ENCODE measurements at regions of chrX and their contacts with region 1.

Region 1: GRCh38 chrX:133297295-133297694 is 79.1 kb upstream of the TFDP3 start:
- DNase-seq: peak; percentile 86
- ATAC-seq: peak; percentile 97
- H3K4me3 ChIP-seq: no peak overlapping the region
- H3K27ac ChIP-seq: peak overlapping the region; percentile 44; the same call in 1 of the 2 replicates
- H3K4me1 ChIP-seq: peaks cover 22% of the 10 kb centered on the region
- H3K27me3 ChIP-seq: no peaks in the 10 kb centered on the region
- CTCF ChIP-seq: no peak

Region 2: GRCh38 chrX:133085785-133086184 is 211.5 kb before region 1 on chrX:
- CTCF ChIA-PET with region 1: no interaction called
- POLR2A ChIA-PET with region 1: no interaction called
- intact Hi-C with region 1: no loop called
- DNase-seq: peak; percentile 87
- ATAC-seq: peak; percentile 96
- H3K4me3 ChIP-seq: no peak overlapping the region
- H3K27ac ChIP-seq: peak overlapping the region; percentile 48
- H3K4me1 ChIP-seq: peaks cover 27% of the 10 kb centered on the region
- H3K27me3 ChIP-seq: no peaks in the 10 kb centered on the region
- CTCF ChIP-seq: no peak

Region 3: GRCh38 chrX:133190877-133191738 is 106.2 kb before region 1 on chrX:
- CTCF ChIA-PET with region 1: no interaction called
- POLR2A ChIA-PET with region 1: no interaction called
- intact Hi-C with region 1: loop called (anchors 5 kb)
- DNase-seq: no peak
- ATAC-seq: peak; percentile 73
- H3K4me3 ChIP-seq: no peak overlapping the region
- H3K27ac ChIP-seq: peak overlapping the region; percentile 92
- H3K4me1 ChIP-seq: peaks cover 23% of the 10 kb centered on the region
- H3K27me3 ChIP-seq: no peaks in the 10 kb centered on the region
- CTCF ChIP-seq: no peak

Region 4: DNA sequence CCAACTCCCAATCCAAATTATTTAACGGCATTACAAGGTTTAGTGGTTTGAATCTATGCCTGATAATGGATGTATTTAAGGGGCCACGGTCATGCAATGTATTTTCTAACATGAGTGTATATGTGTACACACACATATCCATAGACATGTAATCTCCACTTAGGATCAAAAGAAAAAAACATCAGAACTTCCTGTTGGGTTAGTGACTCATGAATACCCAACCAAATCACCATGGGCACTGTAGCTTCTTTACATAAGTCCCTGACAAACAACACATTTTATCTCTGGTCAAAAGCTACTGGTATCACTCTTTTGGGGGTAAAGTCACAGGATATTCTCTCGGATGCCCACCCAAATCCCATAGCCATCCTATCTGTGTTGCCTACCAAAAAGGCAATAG is 42.6 kb before region 1 on chrX:
- CTCF ChIA-PET with region 1: no interaction called
- POLR2A ChIA-PET with region 1: no interaction called
- intact Hi-C with region 1: loop called (anchors 2 kb)
- DNase-seq: peak; percentile 81
- ATAC-seq: peak; percentile 91
- H3K4me3 ChIP-seq: no peak overlapping the region
- H3K27ac ChIP-seq: peak overlapping the region; percentile 53
- H3K4me1 ChIP-seq: peaks cover 28% of the 10 kb centered on the region
- H3K27me3 ChIP-seq: no peaks in the 10 kb centered on the region
- CTCF ChIP-seq: no peak

Region 5: DNA sequence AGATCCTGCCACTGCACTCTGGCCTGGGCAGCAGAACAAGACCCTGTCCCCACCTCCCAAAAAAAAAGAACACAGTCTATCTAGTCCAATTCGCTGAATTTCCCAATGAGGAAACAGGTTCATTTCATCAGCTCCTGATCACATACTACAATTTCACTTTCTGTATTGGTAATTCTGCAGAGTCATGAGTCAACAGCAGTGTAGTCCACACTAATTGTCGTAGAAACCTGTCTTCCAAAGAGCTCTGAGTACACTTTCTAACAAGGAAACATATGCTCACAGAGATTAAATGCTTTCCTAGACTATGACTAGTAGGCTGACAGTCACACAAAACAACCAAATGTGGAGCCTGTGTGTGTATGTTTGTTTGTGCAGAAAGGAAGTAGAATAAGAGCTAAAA is 26.1 kb after region 1 on chrX:
- CTCF ChIA-PET with region 1: no interaction called
- POLR2A ChIA-PET with region 1: no interaction called
- intact Hi-C with region 1: loop called (anchors 1 kb)
- DNase-seq: no peak
- ATAC-seq: no peak
- H3K4me3 ChIP-seq: no peak overlapping the region
- H3K27ac ChIP-seq: no peak overlapping the region
- H3K4me1 ChIP-seq: peaks cover 11% of the 10 kb centered on the region; the same call in 1 of the 2 replicates
- H3K27me3 ChIP-seq: no peaks in the 10 kb centered on the region
- CTCF ChIP-seq: no peak

Measured in PC-3 (cell line).